BJ (cell line): ENCODE measurements at regions of chr16 and their contacts with region 1.

Region 1: GRCh38 chr16:58119509-58119845 is 9.7 kb downstream of the CFAP20 start:
- DNase-seq: no peak
- H3K4me3 ChIP-seq: no peak overlapping the region
- H3K27me3 ChIP-seq: no peaks in the 10 kb centered on the region
- CTCF ChIP-seq: no peak

Region 2: GRCh38 chr16:58011652-58012051 is 107.8 kb before region 1 on chr16:
- CTCF ChIA-PET with region 1: interaction called, 13 read pairs
- POLR2A ChIA-PET with region 1: no interaction called
- DNase-seq: no peak
- H3K4me3 ChIP-seq: no peak overlapping the region
- H3K27me3 ChIP-seq: no peaks in the 10 kb centered on the region
- CTCF ChIP-seq: no peak

Region 3: GRCh38 chr16:58018804-58019203 is 100.7 kb before region 1 on chr16:
- CTCF ChIA-PET with region 1: interaction called, 32 read pairs
- POLR2A ChIA-PET with region 1: no interaction called
- DNase-seq: no peak
- H3K4me3 ChIP-seq: no peak overlapping the region
- H3K27me3 ChIP-seq: no peaks in the 10 kb centered on the region; the same call in 1 of the 2 replicates
- CTCF ChIP-seq: no peak

Region 4: GRCh38 chr16:58025351-58026138 is 93.9 kb before region 1 on chr16 and contains the start of gene MMP15:
- CTCF ChIA-PET with region 1: interaction called, 32 read pairs
- POLR2A ChIA-PET with region 1: no interaction called
- DNase-seq: no peak
- H3K4me3 ChIP-seq: peak within 1 kb of the TSS; percentile 53
- H3K27me3 ChIP-seq: peaks cover 9% of the 10 kb centered on the region
- CTCF ChIP-seq: no peak
- polyA plus RNA-seq, gene MMP15: 0.71 and 1.1 TPM in 2 replicates

Region 5: DNA sequence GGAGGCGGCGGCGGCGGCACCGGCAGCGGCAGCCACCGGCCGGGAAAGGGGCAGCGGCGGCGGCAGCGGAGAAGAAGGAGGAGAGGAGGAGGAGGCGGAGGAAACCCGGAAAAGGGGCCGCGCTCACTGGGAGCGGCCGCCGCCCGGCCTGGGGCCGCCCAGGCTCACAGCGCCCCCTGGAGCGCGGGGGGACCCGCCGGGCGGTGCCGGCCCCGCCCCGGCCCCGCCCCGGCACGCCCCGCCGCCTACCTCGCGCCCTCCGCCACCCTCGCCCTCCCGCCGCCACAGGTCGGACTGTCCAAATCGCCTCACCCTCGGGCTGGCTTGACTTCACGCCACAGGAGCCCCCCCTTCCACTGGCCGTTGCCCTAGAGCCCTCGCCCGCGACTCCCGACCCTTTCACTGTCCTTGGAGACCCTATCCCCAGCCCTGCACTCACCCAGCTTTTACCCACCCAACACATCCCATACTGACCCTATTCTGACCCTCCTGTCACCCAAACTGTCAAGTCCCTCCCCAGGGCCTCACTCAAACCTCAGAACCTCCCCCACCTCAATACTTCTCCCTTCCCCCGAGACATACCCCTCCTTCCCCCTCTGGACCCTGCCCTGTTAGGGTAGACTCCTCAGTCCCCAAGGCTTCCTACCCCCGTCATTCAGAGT is 78.7 kb after region 1 on chr16 and contains the start of gene CSNK2A2:
- CTCF ChIA-PET with region 1: no interaction called
- POLR2A ChIA-PET with region 1: no interaction called
- DNase-seq: no peak
- H3K4me3 ChIP-seq: peak within 1 kb of the TSS; percentile 54
- H3K27me3 ChIP-seq: peaks cover 1% of the 10 kb centered on the region; the same call in 1 of the 2 replicates
- CTCF ChIP-seq: no peak
- polyA plus RNA-seq, gene CSNK2A2: 22.5 and 32.8 TPM in 2 replicates